Mammary epithelial cell (primary cell): ENCODE measurements at regions of chr9 and their contacts with region 1.

Region 1: DNA sequence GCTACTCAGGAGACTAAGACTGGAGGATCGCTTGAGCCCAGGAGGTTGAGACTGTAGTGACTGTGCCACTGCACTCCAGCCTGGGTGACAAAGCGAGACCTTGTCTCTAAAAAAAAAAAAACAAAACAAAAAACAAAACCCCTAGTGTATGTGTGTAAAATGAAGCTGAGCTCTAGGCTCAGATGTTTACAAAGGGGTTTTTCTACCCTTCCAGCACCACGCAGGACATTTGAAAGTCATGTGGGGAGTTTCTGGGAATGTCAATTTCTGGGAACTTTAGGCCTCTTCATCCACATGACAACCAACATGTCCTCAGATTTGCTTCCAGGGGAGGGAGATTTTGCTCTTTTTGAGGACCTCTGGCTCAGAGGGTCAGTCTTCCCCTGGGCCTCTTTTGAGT is 42.4 kb upstream of the AIF1L start:
- DNase-seq: no peak
- H3K4me3 ChIP-seq: no peak overlapping the region
- H3K27ac ChIP-seq: no peak overlapping the region
- H3K4me1 ChIP-seq: no peaks in the 10 kb centered on the region
- H3K27me3 ChIP-seq: peaks cover 2% of the 10 kb centered on the region
- CTCF ChIP-seq: no peak

Region 2: GRCh38 chr9:129929467-129930125 is 1124.3 kb before region 1 on chr9:
- CTCF ChIA-PET with region 1: interaction called, 16 read pairs
- dilution Hi-C with region 1: no loop called
- in situ Hi-C with region 1: no loop called
- intact Hi-C with region 1: no loop called
- DNase-seq: peak; percentile 21
- H3K4me3 ChIP-seq: no peak overlapping the region
- H3K27ac ChIP-seq: no peak overlapping the region
- H3K4me1 ChIP-seq: no peaks in the 10 kb centered on the region
- H3K27me3 ChIP-seq: no peaks in the 10 kb centered on the region
- CTCF ChIP-seq: no peak

Region 3: GRCh38 chr9:130770679-130771442 is 283.0 kb before region 1 on chr9:
- CTCF ChIA-PET with region 1: no interaction called
- dilution Hi-C with region 1: no loop called
- in situ Hi-C with region 1: no loop called
- intact Hi-C with region 1: loop called (anchors 2 kb)
- DNase-seq: peak; percentile 47
- H3K4me3 ChIP-seq: no peak overlapping the region
- H3K27ac ChIP-seq: no peak overlapping the region
- H3K4me1 ChIP-seq: peaks cover 10% of the 10 kb centered on the region
- H3K27me3 ChIP-seq: no peaks in the 10 kb centered on the region
- CTCF ChIP-seq: peak; percentile 45 to 60

Region 4: DNA sequence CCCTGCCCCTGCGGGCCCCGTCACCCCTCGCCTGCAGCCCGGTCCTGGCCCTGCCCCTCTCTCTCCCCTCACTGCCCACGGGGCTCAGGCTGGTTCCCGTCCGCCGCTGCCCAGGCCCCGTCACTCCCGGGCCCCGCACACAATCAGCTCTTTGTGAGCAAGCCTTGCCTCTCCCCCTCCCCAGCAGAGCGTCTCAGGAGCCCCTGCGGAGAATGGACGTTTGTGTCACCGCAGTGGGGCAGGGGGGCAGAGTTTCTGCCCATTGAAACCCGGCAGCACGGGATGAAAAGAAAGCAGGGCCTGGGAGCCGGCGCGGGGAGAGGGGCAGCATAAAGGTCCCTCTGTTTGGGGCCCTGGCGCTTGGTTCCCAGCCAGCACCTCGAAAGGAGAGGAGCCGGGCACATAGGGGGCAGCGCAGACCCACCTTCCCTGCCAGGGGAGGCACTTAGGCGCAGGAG is 58.0 kb after region 1 on chr9:
- CTCF ChIA-PET with region 1: interaction called, 4 read pairs
- dilution Hi-C with region 1: no loop called
- in situ Hi-C with region 1: no loop called
- intact Hi-C with region 1: loop called (anchors 5 kb)
- DNase-seq: no peak
- H3K4me3 ChIP-seq: no peak overlapping the region
- H3K27ac ChIP-seq: no peak overlapping the region
- H3K4me1 ChIP-seq: peaks cover 15% of the 10 kb centered on the region
- H3K27me3 ChIP-seq: no peaks in the 10 kb centered on the region
- CTCF ChIP-seq: no peak

Region 5: DNA sequence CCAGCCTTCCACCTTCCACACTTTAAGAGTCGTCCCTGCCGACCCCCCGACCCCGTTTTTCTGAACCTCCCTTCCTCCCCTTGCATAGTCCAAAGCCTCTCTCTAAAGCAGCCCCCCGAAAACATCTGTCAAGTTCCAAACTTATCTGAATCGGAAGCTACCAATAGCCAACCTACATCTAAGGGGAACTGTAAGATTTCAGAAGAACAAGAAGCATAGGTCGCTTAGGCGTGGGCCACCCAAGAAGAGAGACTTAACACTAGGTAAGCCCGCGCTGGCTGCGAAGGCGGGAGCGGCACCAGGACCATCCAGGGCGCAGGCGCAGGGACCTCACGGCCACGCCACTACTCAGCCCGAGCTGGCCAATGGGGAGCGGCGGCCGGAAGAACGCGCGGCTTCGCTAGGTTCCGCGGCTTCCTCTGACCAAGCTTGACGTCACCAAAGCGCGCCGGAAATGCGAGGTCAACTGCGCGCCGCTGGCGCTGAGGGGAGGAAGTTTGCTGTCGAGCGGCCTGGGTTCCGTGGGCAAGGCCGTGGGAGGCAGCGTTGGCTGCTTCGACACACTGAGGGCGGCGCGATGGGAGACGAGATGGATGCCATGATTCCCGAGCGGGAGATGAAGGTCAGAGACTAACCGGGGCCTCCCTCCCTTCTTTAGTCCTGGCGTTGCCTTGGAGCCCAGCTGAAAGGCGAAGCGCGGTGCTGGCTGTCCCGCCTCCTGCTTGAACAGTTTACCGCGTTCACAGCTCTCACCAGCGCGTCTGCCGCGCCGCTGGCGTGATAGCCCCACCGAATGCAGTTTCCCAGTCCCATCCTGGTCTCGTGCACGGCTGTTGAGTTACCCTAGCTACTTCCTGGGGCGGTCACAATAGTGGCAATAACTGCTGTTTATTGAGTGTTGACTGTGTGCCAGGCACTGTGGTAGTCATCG is 71.5 kb after region 1 on chr9 and contains the start of gene NUP214:
- CTCF ChIA-PET with region 1: no interaction called
- dilution Hi-C with region 1: no loop called
- in situ Hi-C with region 1: no loop called
- intact Hi-C with region 1: loop called (anchors 1 kb)
- DNase-seq: peak; percentile 98
- H3K4me3 ChIP-seq: peak within 1 kb of the TSS; percentile 54 to 83 (median 80)
- H3K27ac ChIP-seq: peak within 1 kb of the TSS; percentile 69
- H3K4me1 ChIP-seq: peaks cover 9% of the 10 kb centered on the region
- H3K27me3 ChIP-seq: no peaks in the 10 kb centered on the region
- CTCF ChIP-seq: no peak
- total RNA-seq, gene NUP214: 17.2 to 42.5 TPM

Region 6: GRCh38 chr9:131334629-131335367 is 280.9 kb after region 1 on chr9:
- CTCF ChIA-PET with region 1: no interaction called
- dilution Hi-C with region 1: no loop called
- in situ Hi-C with region 1: loop called (anchors 10 to 25 kb)
- intact Hi-C with region 1: loop called (anchors 1 kb)
- DNase-seq: no peak
- H3K4me3 ChIP-seq: no peak overlapping the region
- H3K27ac ChIP-seq: no peak overlapping the region
- H3K4me1 ChIP-seq: no peaks in the 10 kb centered on the region
- H3K27me3 ChIP-seq: no peaks in the 10 kb centered on the region
- CTCF ChIP-seq: no peak